CD4-positive, alpha-beta memory T cell (primary cell): ENCODE measurements at regions of chr11 and their contacts with region 1.

Region 1: DNA sequence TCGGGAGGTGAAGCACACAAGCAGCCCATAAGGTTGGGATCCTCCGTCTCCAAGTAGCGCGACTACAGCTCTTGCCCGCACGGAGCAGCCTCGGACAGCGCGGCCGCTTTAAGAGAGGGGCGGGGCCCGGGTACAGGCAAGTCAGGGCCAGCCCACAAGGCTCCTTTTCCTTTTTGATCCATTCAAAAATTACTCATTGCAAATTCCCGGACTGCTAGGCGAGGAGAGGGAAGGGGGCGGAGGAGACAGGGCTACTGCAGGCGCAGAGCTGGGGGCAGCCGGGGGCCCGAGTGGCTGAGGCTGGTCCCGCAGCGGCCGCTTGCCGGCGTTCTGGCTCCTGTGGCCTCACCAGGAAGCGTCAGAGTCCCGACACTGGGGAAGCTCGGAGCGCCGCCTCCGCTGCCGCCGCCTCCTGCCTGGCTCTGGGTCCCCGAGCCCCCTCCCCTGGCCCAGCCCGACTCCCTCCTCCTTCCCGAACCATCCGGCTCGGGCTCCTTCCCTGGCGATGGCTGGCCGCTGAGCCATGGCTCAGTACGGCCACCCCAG is at the start of gene UBASH3B:
- DNase-seq: peak; percentile 63 to 68 (median 66)
- H3K4me3 ChIP-seq: peak within 1 kb of the TSS; percentile 55 to 86
- H3K4me3 Mint-ChIP-seq: peak within 1 kb of the TSS; percentile 97 to 98 (median 98)
- H3K27ac ChIP-seq: peak within 1 kb of the TSS; percentile 66
- H3K27ac Mint-ChIP-seq: peak within 1 kb of the TSS; percentile 88 to 98 (median 95)
- H3K4me1 ChIP-seq: peaks cover 44% of the 10 kb centered on the region
- H3K4me1 Mint-ChIP-seq: peaks cover 20 to 53% (median 40%) of the 10 kb centered on the region in 4 donors
- H3K27me3 ChIP-seq: no peaks in the 10 kb centered on the region
- H3K27me3 Mint-ChIP-seq: no peaks in the 10 kb centered on the region
- total RNA-seq, gene UBASH3B: 26.6 to 30.9 TPM

Region 2: DNA sequence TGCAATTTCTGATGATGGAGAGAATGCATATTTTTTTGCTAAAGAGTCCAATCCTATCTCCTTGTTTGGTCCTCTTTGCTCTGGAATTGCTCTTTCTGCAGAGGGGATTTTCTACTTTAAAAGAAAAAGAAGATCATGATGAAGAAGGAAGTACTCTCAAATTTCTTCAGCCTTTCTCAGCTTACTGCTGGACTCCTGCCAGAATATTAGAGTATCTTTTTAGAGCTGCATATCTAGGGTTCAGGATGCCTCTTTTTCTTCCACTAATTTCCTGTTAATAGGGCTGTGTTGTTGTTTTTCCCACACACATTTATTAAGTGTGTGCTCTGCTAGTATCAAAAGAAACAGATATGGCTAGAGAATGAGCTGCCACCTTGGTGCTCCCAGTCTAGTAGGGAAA is 18.1 kb after region 1 on chr11:
- CTCF ChIA-PET with region 1: interaction called, 65 read pairs
- POLR2A ChIA-PET with region 1: interaction called, 73 read pairs
- intact Hi-C with region 1: loop called (anchors 1 kb)
- DNase-seq: no peak
- H3K4me3 ChIP-seq: no peak overlapping the region
- H3K4me3 Mint-ChIP-seq: peak overlapping the region in 4 of 8 donors; percentile 22 to 60 (median 34)
- H3K27ac ChIP-seq: no peak overlapping the region
- H3K27ac Mint-ChIP-seq: peak overlapping the region in 6 of 7 donors; percentile 36 to 77 (median 61)
- H3K4me1 ChIP-seq: peaks cover 90% of the 10 kb centered on the region
- H3K4me1 Mint-ChIP-seq: peaks cover 50 to 91% (median 72%) of the 10 kb centered on the region in 4 donors
- H3K27me3 ChIP-seq: no peaks in the 10 kb centered on the region
- H3K27me3 Mint-ChIP-seq: no peaks in the 10 kb centered on the region

Region 3: DNA sequence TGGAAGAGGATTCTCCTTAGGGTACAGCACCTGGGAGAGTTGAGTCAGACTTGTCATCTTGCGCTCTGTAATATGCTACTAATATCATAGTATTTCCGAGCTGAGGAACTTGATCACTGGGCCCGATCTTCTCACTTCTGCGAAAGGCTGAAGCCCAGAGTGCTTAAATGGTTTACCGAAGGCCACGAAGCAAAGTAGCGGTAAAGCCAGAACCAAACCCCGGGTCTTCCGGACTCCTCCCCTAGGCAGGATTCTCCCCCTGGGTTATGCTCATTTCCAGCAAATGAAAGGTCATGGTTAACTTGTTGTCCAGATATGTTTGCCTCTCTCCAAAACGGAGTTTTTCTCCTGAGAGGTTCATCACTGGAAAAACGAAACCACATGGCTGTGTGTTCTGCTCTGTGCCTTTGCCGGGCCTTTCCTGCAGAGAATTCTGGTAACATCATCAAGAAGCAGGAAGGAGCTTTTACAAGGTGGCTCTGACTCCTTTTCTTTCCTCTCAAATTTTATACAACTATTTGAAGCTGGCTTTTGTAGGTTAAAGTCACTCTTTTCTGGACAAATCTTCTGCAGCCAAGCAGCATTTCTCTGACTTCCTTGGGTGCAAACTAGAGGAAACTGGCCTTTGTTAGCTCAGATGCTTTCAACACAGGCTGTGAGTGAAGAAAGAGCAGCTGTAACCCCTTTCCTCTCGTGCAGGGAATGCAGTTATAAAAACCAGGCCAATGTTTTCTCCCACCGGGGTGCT is 35.4 kb after region 1 on chr11:
- CTCF ChIA-PET with region 1: interaction called, 69 read pairs
- POLR2A ChIA-PET with region 1: interaction called, 120 read pairs
- intact Hi-C with region 1: loop called (anchors 1 kb)
- DNase-seq: peak in 3 of 5 donors; percentile 14 to 26 (median 18)
- H3K4me3 ChIP-seq: peak overlapping the region in 1 of 2 donors; percentile 40
- H3K4me3 Mint-ChIP-seq: peak overlapping the region; percentile 74 to 88 (median 76)
- H3K27ac ChIP-seq: peak overlapping the region; percentile 63
- H3K27ac Mint-ChIP-seq: peak overlapping the region; percentile 92 to 94 (median 93)
- H3K4me1 ChIP-seq: peaks cover 76% of the 10 kb centered on the region
- H3K4me1 Mint-ChIP-seq: peaks cover 55 to 87% (median 73%) of the 10 kb centered on the region in 4 donors
- H3K27me3 ChIP-seq: no peaks in the 10 kb centered on the region
- H3K27me3 Mint-ChIP-seq: no peaks in the 10 kb centered on the region

Region 4: GRCh38 chr11:122733318-122733717 is 77.7 kb after region 1 on chr11:
- CTCF ChIA-PET with region 1: interaction called, 16 read pairs
- POLR2A ChIA-PET with region 1: interaction called, 3 read pairs
- intact Hi-C with region 1: no loop called
- DNase-seq: no peak
- H3K4me3 ChIP-seq: no peak overlapping the region
- H3K4me3 Mint-ChIP-seq: peak overlapping the region in 2 of 8 donors; percentile 15 to 39
- H3K27ac ChIP-seq: no peak overlapping the region
- H3K27ac Mint-ChIP-seq: peak overlapping the region in 2 of 7 donors; percentile 32 to 57
- H3K4me1 ChIP-seq: peaks cover 58% of the 10 kb centered on the region
- H3K4me1 Mint-ChIP-seq: peaks cover 12 to 40% (median 26%) of the 10 kb centered on the region in 4 donors
- H3K27me3 ChIP-seq: no peaks in the 10 kb centered on the region
- H3K27me3 Mint-ChIP-seq: no peaks in the 10 kb centered on the region

Region 5: DNA sequence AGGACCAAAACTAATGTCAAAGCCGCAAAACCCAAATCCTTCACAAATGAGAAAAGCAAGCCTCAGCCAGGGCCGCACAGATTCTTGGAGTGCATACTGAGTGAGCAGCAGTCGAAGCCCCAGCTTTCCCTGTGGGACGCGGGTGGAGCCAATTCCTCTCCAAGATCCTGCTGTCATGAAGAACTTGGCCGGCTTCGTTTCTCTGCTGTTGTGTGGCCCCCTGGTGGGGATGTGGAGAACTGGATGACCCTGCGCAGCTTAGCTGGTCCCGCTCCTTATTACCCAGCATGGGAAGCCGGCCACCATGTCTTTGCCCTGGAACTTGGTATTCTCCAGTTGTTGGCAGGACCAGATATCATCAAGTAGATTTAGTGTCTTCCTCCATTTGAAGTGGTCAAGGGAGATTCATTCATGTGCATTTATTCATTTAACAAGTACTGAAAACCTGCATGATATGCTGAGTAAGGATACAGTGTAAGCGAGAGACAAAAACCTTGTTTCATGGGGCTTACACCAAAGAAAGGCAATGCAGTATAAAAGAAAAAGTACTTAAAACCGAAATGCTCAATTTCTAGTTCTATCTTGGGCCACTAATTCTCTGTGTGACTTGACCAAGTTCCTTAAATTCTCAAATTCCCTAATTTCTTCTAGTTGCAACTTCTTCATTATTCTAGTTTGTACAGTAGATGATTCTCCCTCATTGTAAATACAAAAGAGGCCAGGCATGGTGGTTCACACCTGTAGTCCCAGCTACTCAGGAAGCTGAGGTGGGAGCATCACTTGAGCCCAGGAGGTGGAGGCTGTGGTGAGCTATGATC is 126.0 kb after region 1 on chr11:
- CTCF ChIA-PET with region 1: interaction called, 18 read pairs
- POLR2A ChIA-PET with region 1: interaction called, 3 read pairs
- intact Hi-C with region 1: loop called (anchors 1 kb)
- DNase-seq: peak; percentile 62 to 71 (median 67)
- H3K4me3 ChIP-seq: no peak overlapping the region
- H3K4me3 Mint-ChIP-seq: no peak overlapping the region
- H3K27ac ChIP-seq: no peak overlapping the region
- H3K27ac Mint-ChIP-seq: no peak overlapping the region
- H3K4me1 ChIP-seq: no peaks in the 10 kb centered on the region
- H3K4me1 Mint-ChIP-seq: peaks cover 0 to 8% (median 1%) of the 10 kb centered on the region in 4 donors
- H3K27me3 ChIP-seq: no peaks in the 10 kb centered on the region
- H3K27me3 Mint-ChIP-seq: no peaks in the 10 kb centered on the region